ENCODE measurements at regions of chr12 and their contacts with region 1.

Region 1: GRCh38 chr12:8544295-8544694 is 3.6 kb upstream of the CLEC4E start:
- DNase-seq: peak; percentile 70
- CTCF ChIP-seq: peak; percentile 82

Region 2: GRCh38 chr12:8519171-8519570 is 25.1 kb before region 1 on chr12:
- CTCF ChIA-PET with region 1: interaction called, 16 read pairs
- POLR2A ChIA-PET with region 1: no interaction called
- DNase-seq: no peak
- CTCF ChIP-seq: no peak

Region 3: DNA sequence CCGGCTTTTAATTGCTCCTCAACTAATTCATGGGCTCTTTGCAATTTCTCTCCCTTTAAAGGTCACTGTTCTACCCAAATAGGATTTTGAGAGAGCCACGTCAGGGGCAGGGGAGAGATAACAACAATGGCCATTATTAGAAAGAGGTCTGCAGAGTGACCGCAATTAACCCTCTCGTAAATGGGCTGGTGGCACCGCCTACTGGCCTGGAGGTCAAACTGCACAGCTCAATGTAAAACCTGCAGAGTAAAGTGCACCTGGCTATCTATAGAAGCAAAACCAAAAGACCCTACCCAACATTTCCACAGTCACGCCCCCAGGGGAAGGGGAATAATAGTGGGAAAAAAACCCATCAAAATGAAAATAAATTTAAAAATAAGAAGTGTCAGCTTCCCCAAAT is 18.0 kb after region 1 on chr12:
- CTCF ChIA-PET with region 1: interaction called, 40 read pairs
- POLR2A ChIA-PET with region 1: no interaction called
- DNase-seq: no peak
- CTCF ChIP-seq: no peak

Region 4: DNA sequence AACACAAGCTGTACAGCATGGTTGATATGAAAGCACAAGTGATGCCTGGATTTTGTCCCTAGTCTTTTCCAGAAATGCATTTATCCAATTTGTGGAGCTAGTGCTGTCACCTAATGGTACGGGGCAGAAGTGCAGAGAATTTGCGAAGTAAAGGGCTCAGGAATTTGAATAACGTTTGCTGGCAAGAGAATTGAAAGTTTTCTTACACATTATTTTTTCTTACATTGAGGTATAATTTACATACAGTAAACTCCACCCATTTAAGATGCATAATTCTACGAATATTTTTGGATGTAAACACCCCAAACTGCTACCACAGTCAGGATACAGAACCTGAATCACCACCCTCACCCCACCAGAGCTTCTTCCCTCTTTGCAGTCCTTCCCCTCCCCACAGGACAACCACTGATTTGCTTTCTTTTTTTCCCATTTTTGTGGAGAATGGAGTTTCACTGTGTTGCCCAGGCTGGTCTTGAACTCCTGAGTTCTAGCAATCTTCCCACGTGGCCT is 64.8 kb after region 1 on chr12:
- CTCF ChIA-PET with region 1: interaction called, 71 read pairs
- POLR2A ChIA-PET with region 1: no interaction called
- DNase-seq: no peak
- CTCF ChIP-seq: peak; percentile 84

Region 5: DNA sequence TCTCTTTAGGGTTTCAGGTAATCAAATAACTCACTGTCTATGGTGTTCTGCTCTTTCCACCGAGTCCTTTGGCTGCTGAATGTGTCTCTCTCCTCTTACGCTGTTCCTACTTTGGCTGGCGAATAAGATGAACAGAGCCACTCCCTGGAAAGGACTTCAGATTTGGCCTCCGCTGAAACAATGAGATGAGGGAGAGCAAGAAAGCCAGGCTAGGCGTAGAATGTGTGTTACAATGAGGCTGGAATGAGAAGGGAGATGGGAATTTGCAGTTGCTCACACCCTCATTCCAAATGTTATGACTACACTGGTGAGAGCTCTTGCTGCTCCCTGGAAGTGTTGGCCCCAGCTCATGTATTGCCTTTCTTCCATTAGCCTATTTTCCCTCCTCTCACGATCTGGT is 118.3 kb after region 1 on chr12 and contains the start of gene MFAP5:
- CTCF ChIA-PET with region 1: interaction called, 10 read pairs
- POLR2A ChIA-PET with region 1: no interaction called
- DNase-seq: no peak
- CTCF ChIP-seq: no peak

Region 6: DNA sequence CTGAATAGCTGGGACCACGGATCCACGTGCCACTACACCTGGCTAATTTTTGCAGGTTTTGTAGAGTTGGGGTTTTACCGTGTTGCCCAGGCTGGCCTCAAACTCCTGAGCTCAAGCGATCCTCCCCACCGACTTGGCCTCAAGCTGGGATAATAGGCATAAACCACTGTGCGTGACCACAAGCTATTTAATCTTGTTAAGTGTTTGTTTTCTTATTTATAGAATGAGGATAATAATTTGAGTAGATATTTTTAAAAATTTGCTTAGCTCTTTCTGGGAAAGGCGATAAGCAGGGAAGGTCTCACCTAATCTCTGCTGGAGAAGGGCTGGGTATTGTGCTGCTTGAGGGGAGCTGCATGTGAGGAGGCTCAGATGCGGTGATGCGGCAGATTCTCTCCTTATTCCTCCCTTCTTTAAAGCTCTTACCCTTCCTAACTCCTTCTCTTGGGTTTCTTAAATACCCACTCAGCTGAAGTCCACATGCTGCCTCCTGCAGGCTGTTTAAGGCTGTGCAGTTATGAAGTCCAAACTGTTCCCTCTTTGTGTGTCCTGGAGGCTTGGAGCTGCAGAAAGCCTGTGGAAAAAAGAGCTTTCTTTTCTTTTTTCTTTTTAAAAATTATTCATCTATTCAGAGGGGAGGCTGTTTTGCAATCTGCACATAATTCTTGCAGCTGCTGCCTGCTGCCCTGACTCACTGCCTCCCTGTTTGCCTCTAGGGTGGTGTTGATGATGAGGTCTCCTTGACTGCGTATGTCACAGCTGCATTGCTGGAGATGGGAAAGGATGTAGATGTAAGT is 316.1 kb after region 1 on chr12:
- CTCF ChIA-PET with region 1: interaction called, 38 read pairs
- POLR2A ChIA-PET with region 1: no interaction called
- DNase-seq: peak; percentile 58
- CTCF ChIP-seq: peak; percentile 63

Measured in GM10248 (cell line).